Mammary epithelial cell (primary cell): ENCODE measurements at regions of chr12 and their contacts with region 1.

Region 1: DNA sequence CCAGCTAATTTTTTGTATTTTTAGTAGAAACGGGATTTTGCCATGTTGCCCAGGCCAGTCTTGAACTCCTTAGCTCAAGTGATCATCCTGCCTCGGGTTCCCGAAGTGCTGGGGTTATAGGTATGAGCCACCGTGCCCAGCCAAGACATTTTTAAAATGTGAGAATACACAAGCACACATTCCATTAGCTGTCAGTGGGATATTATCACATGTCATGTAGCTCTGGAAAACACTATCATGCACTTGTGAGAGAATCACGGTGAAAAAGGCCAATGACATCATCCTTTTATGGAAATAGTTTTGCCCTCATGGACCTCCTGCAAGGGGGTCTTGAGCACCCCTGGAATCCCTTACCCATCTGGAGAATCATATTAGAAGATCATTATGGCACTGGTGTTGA is 28.3 kb downstream of the ERC1 start:
- DNase-seq: no peak
- H3K4me3 ChIP-seq: no peak overlapping the region
- H3K27ac ChIP-seq: no peak overlapping the region
- H3K4me1 ChIP-seq: no peaks in the 10 kb centered on the region
- H3K27me3 ChIP-seq: no peaks in the 10 kb centered on the region
- CTCF ChIP-seq: no peak

Region 2: GRCh38 chr12:1054117-1054870 is 35.0 kb after region 1 on chr12:
- CTCF ChIA-PET with region 1: no interaction called
- dilution Hi-C with region 1: no loop called
- in situ Hi-C with region 1: no loop called
- intact Hi-C with region 1: loop called (anchors 5 kb)
- DNase-seq: no peak
- H3K4me3 ChIP-seq: no peak overlapping the region
- H3K27ac ChIP-seq: no peak overlapping the region
- H3K4me1 ChIP-seq: no peaks in the 10 kb centered on the region
- H3K27me3 ChIP-seq: no peaks in the 10 kb centered on the region
- CTCF ChIP-seq: no peak